B cell (primary cell): ENCODE measurements at regions of chr11 and their contacts with region 1.

Region 1: GRCh38 chr11:46845740-46846509 is at the start of gene CKAP5:
- DNase-seq: peak; percentile 91
- ATAC-seq: peak; percentile 89
- H3K4me3 ChIP-seq: peak within 1 kb of the TSS; percentile 36 to 89 (median 83)
- H3K4me3 Mint-ChIP-seq: peak within 1 kb of the TSS; percentile 97
- H3K27ac ChIP-seq: peak within 1 kb of the TSS; percentile 65 to 67
- H3K27ac Mint-ChIP-seq: peak within 1 kb of the TSS; percentile 97
- H3K4me1 ChIP-seq: peaks cover 12 to 15% of the 10 kb centered on the region in 2 donors
- H3K4me1 Mint-ChIP-seq: peaks cover 31% of the 10 kb centered on the region
- H3K27me3 ChIP-seq: no peaks in the 10 kb centered on the region
- H3K27me3 Mint-ChIP-seq: no peaks in the 10 kb centered on the region
- CTCF ChIP-seq: no peak
- total RNA-seq, gene CKAP5: 49.4 and 54.3 TPM in 2 replicates

Region 2: DNA sequence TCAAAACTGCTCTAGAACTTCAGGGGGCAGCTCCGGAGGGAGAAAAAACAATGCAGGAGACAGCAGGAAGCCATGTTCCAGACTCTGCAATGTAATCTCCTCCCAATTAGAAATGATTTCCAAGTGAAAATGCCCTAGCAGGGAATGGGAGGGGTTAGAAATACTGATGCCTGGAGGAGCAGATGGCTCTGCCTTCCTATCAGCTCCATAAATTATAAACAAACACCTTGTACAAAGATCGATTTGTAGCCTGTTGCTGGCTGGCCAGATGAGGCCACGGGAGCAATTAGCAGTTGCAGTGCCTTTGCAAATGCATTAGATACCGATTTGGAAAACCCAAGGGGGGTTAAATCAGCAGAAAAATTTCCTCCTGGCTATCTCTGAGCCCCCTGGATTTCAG is 407.7 kb before region 1 on chr11:
- CTCF ChIA-PET with region 1: no interaction called
- POLR2A ChIA-PET with region 1: no interaction called
- intact Hi-C with region 1: no loop called
- DNase-seq: no peak
- ATAC-seq: no peak
- H3K4me3 ChIP-seq: no peak overlapping the region
- H3K4me3 Mint-ChIP-seq: no peak overlapping the region
- H3K27ac ChIP-seq: no peak overlapping the region
- H3K27ac Mint-ChIP-seq: no peak overlapping the region
- H3K4me1 ChIP-seq: no peaks in the 10 kb centered on the region
- H3K4me1 Mint-ChIP-seq: no peaks in the 10 kb centered on the region
- H3K27me3 ChIP-seq: no peaks in the 10 kb centered on the region
- H3K27me3 Mint-ChIP-seq: no peaks in the 10 kb centered on the region
- CTCF ChIP-seq: no peak

Region 3: DNA sequence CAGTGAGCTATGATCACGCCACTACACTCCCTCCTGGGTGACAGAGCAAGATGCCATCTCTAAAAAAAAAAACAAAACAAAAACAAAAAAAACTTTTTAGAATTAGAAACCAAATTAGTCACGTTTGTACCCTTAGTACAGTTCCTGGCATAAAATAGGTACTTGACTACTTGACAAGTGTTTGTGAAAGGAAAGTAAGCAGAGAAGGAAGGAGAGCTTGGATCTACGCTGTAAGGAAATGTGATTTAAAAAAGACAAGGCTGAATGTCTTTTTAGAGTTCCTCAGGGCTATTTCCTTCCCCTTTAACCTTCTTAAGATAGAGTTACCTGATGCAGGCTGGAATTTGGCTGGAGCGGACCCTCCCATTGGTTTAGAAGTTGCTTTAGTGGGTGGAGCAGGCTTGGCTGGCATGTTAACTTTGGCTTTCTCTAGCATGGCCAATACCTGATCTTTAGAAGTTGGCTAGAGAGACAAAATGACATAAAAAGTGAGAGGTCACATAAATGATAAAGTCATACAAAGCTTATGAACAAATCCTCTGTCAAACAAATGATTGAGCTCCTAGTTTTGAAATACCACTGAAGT is 76.2 kb before region 1 on chr11:
- CTCF ChIA-PET with region 1: no interaction called
- POLR2A ChIA-PET with region 1: no interaction called
- intact Hi-C with region 1: no loop called
- DNase-seq: no peak
- ATAC-seq: no peak
- H3K4me3 ChIP-seq: no peak overlapping the region
- H3K4me3 Mint-ChIP-seq: no peak overlapping the region
- H3K27ac ChIP-seq: no peak overlapping the region
- H3K27ac Mint-ChIP-seq: no peak overlapping the region
- H3K4me1 ChIP-seq: no peaks in the 10 kb centered on the region
- H3K4me1 Mint-ChIP-seq: no peaks in the 10 kb centered on the region
- H3K27me3 ChIP-seq: no peaks in the 10 kb centered on the region
- H3K27me3 Mint-ChIP-seq: no peaks in the 10 kb centered on the region
- CTCF ChIP-seq: no peak

Region 4: DNA sequence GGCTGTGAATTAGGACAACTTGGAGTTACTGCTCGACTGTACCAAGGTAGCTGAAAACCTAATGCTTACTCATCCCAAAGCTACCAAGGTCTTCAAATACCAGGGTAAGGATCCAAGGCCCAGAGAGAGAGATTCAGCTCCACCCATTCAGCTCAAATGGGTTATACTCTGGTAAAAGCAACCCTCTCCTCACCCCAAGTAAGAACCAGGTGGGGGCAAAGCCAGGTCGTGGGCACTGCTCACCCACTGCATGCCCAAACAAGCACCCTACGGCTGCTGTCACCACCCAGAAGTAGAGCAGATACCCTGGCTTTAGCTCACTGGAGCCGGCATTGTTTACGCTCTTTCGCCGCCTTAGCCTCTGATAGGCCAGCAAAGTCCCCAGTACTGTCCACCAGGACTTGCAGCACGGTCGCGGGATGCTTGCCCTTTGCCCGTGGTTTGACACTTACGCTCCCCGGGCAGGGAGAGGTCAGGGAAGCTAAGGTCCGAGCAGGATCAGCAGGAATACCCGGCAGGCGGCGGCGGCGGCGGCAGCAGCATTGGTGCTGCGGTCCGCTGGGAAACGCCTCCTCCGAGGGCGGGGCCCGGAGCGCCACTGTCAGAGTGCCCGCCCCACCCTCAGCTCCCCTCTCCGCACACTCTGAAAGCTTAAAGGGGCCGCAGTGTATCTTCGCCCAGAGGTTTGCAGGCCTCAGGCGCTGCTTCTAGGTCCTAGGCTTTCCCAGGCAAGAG is 19.4 kb before region 1 on chr11:
- CTCF ChIA-PET with region 1: interaction called, 5 read pairs
- POLR2A ChIA-PET with region 1: interaction called, 3 read pairs
- intact Hi-C with region 1: loop called (anchors 1 kb)
- DNase-seq: peak; percentile 75
- ATAC-seq: peak; percentile 100
- H3K4me3 ChIP-seq: peak overlapping the region; percentile 55 to 85 (median 61)
- H3K4me3 Mint-ChIP-seq: peak overlapping the region; percentile 88
- H3K27ac ChIP-seq: peak overlapping the region in 1 of 2 donors; percentile 31
- H3K27ac Mint-ChIP-seq: peak overlapping the region; percentile 46
- H3K4me1 ChIP-seq: peaks cover 11 to 13% of the 10 kb centered on the region in 2 donors
- H3K4me1 Mint-ChIP-seq: peaks cover 22% of the 10 kb centered on the region
- H3K27me3 ChIP-seq: no peaks in the 10 kb centered on the region
- H3K27me3 Mint-ChIP-seq: no peaks in the 10 kb centered on the region
- CTCF ChIP-seq: no peak

Region 5: GRCh38 chr11:46916286-46917108 is 70.6 kb after region 1 on chr11:
- CTCF ChIA-PET with region 1: no interaction called
- POLR2A ChIA-PET with region 1: no interaction called
- intact Hi-C with region 1: loop called (anchors 5 kb)
- DNase-seq: peak; percentile 24
- ATAC-seq: no peak
- H3K4me3 ChIP-seq: peak overlapping the region in 4 of 5 experiments; percentile 14 to 54 (median 50)
- H3K4me3 Mint-ChIP-seq: peak overlapping the region; percentile 86
- H3K27ac ChIP-seq: no peak overlapping the region
- H3K27ac Mint-ChIP-seq: no peak overlapping the region
- H3K4me1 ChIP-seq: peaks cover 28 to 31% of the 10 kb centered on the region in 2 donors
- H3K4me1 Mint-ChIP-seq: peaks cover 30% of the 10 kb centered on the region
- H3K27me3 ChIP-seq: peaks cover 0 to 64% (median 36%) of the 10 kb centered on the region in 4 experiments
- H3K27me3 Mint-ChIP-seq: peaks cover 54% of the 10 kb centered on the region
- CTCF ChIP-seq: no peak

Region 6: GRCh38 chr11:46948378-46949131 is 102.6 kb after region 1 on chr11:
- CTCF ChIA-PET with region 1: no interaction called
- POLR2A ChIA-PET with region 1: no interaction called
- intact Hi-C with region 1: no loop called
- DNase-seq: peak; percentile 8
- ATAC-seq: no peak
- H3K4me3 ChIP-seq: no peak overlapping the region
- H3K4me3 Mint-ChIP-seq: no peak overlapping the region
- H3K27ac ChIP-seq: no peak overlapping the region
- H3K27ac Mint-ChIP-seq: no peak overlapping the region
- H3K4me1 ChIP-seq: no peaks in the 10 kb centered on the region
- H3K4me1 Mint-ChIP-seq: peaks cover 2% of the 10 kb centered on the region
- H3K27me3 ChIP-seq: no peaks in the 10 kb centered on the region
- H3K27me3 Mint-ChIP-seq: no peaks in the 10 kb centered on the region
- CTCF ChIP-seq: no peak

Region 7: DNA sequence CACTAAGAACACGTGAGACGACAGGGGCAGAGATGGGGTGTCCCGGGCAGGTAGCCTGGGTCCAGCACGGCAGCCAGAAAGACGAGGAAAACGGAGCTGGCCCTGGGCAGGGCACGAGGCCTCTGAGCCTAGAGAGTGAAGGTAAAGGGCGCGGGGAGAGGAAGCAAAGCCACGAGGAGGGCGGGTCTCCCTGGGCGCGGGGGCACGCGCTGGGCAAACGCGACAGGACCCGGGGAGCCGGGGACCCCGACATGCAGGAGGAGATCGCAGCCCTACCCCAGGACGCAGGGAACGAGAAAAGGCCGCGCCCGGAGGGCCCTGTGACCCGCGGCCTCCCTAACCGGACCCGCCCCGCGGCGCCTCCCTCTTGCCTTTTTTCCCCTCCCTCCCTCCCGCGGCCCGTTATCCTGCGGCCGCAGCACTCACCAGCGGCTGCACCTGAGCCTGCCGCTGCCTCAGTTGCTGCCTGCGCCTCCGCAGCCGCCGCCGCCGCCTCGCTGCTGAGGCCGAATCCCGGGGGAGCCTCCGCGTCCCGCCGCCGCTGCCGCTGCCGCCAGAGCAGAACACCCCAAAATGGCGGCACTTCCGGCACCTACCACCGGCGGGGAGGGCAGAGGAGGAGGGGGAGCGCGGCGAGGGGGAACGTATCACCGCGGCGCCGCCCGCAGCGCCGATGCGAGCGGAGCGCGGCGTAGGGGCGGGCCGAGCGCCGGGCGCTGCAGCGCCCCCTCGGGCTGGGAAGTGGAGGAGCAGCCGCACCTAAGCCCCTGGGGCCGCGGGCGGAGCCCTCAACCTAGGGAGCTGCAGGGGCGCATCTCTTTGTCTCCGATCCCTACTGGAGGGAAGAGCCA is 706.9 kb after region 1 on chr11 and contains the start of gene CELF1:
- CTCF ChIA-PET with region 1: no interaction called
- POLR2A ChIA-PET with region 1: no interaction called
- intact Hi-C with region 1: no loop called
- DNase-seq: peak; percentile 96
- ATAC-seq: peak; percentile 95
- H3K4me3 ChIP-seq: peak within 1 kb of the TSS; percentile 65 to 94 (median 90)
- H3K4me3 Mint-ChIP-seq: peak within 1 kb of the TSS; percentile 99
- H3K27ac ChIP-seq: peak within 1 kb of the TSS; percentile 72 to 88
- H3K27ac Mint-ChIP-seq: peak within 1 kb of the TSS; percentile 93
- H3K4me1 ChIP-seq: peaks cover 31 to 32% of the 10 kb centered on the region in 2 donors
- H3K4me1 Mint-ChIP-seq: peaks cover 44% of the 10 kb centered on the region
- H3K27me3 ChIP-seq: no peaks in the 10 kb centered on the region
- H3K27me3 Mint-ChIP-seq: no peaks in the 10 kb centered on the region
- CTCF ChIP-seq: peak; percentile 96
- total RNA-seq, gene CELF1: 153 and 167 TPM in 2 replicates